ENCODE measurements at regions of chr5 and their contacts with region 1.

Region 1: DNA sequence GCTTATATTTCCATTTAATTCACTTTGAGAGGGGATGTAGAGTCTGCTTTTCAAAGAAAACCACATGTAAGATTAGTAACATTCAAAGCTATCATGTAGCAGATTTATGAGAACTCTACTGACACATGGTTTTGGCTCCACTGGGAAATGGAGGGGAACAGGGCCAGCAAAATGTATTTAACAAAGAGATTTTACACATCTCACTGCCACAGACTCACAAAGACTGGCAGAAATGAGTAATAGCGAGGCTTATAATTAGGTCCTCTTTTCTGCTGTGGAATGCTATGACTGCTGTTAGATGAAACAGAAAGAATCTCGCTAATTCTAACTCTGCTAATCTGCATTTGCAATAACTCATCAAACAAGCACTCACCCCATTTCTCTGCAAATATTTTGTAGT is 4.5 kb downstream of the DAP start:
- DNase-seq: no peak
- ATAC-seq: no peak

Region 2: DNA sequence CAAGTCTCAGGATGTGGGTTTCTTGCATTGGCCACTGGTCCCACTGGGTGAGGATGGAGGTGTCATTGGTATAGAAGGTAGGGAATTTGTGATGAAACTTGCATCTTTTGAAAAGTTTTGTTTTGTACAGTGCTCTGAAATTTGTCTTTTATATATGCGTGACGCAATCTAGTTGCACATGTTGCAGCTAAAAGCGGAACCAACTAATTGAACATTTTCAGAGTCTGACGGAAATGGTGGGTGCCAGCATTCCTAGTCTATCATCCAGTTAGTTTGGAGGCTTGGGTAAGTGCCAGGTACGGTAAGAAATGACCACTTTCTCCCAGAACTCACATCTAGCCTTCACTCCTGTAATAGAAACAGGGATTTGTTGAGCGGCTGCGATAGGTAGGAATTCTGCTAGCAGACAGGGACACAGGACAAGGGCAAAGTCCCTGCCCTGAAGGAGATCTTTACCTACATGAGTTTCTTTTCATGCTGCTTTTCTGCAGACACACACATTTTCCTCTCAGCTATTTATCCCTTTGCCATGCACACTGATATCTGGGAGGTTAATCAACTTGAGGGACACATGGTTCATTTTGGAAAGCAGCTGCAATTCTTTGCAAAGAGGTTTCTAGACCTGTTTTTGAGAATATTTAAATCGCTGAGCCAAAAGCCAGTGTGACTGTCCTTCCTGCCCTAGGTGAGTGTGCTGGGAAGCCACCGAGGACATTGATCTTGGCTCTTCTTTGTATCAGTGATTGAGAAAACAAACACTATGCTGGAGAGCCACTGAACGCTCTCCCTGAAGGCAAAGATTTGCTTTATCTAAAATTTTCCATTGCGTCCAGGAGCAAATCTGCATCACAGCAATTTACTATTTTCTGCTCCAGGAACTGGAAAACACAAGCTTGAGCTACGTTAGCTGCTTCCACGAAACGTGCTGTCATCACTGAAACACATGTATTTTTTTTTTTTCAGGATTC is 85.2 kb before region 1 on chr5:
- intact Hi-C with region 1: no loop called
- DNase-seq: no peak
- ATAC-seq: no peak

Region 3: GRCh38 chr5:10701567-10702039 is 54.9 kb before region 1 on chr5:
- intact Hi-C with region 1: loop called (anchors 5 kb)
- DNase-seq: no peak
- ATAC-seq: peak; percentile 67

Measured in Right ventricle myocardium superior (tissue), 1 donor.